ENCODE measurements at regions of chr17 and their contacts with region 1.

Region 1: DNA sequence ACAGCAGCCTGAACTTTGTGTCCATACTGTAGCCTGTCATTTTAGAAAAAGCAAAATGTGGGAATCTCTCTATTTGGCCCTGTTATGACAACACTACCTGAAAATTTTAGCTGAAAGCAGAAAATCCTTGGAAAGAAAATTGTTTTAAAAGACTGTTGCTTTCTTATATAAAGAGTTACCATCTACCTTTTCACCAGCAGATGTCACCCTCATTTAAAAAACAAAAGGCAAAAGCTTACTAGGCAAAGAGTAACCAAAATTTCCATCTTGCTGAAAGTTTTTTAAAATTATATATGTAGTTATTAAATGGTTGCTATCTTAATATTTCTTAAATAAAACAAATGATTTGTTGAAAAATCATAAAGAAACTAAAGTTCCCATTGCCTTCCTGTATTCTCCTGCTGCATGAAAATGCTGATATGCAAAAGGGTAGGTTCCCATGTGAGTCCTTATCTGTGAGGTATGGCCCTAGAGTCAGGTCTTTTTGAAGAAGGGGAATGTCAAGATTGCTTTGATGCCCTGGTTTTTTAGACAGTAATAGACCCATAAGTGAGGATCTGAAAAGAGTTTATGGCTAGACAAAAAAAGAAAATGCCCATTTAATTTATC is 61.0 kb downstream of the TNRC6C start:
- DNase-seq: no peak
- H3K4me3 Mint-ChIP-seq: peak overlapping the region; percentile 58
- H3K27ac Mint-ChIP-seq: peak overlapping the region; percentile 94
- H3K4me1 Mint-ChIP-seq: peaks cover 37% of the 10 kb centered on the region
- H3K27me3 Mint-ChIP-seq: no peaks in the 10 kb centered on the region

Region 2: DNA sequence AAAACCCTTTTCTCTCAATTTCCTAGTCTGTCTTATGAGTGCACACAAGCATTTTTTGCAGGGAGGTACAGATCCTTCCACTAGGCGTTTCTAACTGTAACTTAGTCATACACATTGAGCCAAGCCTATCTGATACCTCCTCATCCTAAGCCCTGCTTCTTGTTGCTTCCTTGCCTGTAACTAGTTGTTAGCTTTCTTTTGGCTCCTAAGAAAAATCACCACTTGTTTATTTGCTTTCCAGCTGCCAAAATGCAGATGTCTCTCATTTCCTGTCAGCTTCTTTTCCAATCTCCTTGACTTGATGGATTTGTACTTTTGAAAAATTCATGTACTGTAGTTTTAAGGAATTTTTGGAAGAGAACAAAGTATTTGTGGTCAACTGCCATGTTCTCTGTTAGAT is 12.7 kb after region 1 on chr17:
- CTCF ChIA-PET with region 1: interaction called, 11 read pairs
- DNase-seq: no peak
- H3K4me3 Mint-ChIP-seq: no peak overlapping the region
- H3K27ac Mint-ChIP-seq: no peak overlapping the region
- H3K4me1 Mint-ChIP-seq: peaks cover 9% of the 10 kb centered on the region
- H3K27me3 Mint-ChIP-seq: no peaks in the 10 kb centered on the region

Region 3: GRCh38 chr17:78040440-78041385 is 21.2 kb after region 1 on chr17:
- CTCF ChIA-PET with region 1: interaction called, 11 read pairs
- DNase-seq: peak; percentile 64
- H3K4me3 Mint-ChIP-seq: peak overlapping the region; percentile 55
- H3K27ac Mint-ChIP-seq: peak overlapping the region; percentile 53
- H3K4me1 Mint-ChIP-seq: peaks cover 19% of the 10 kb centered on the region
- H3K27me3 Mint-ChIP-seq: no peaks in the 10 kb centered on the region

Region 4: GRCh38 chr17:78082988-78083387 is 63.5 kb after region 1 on chr17:
- CTCF ChIA-PET with region 1: interaction called, 28 read pairs
- DNase-seq: no peak
- H3K4me3 Mint-ChIP-seq: no peak overlapping the region
- H3K27ac Mint-ChIP-seq: no peak overlapping the region
- H3K4me1 Mint-ChIP-seq: peaks cover 16% of the 10 kb centered on the region
- H3K27me3 Mint-ChIP-seq: no peaks in the 10 kb centered on the region

Measured in activated naive CD4-positive, alpha-beta T cell treated with anti-CD3 and anti-CD28 coated beads, Interleukin-2, amount 10 ng/mL, durations not matched to agents 7 days and 5 days (primary cell).